Colonic mucosa (tissue), 4 donors: ENCODE measurements at regions of chr14 and their contacts with region 1.

Region 1: DNA sequence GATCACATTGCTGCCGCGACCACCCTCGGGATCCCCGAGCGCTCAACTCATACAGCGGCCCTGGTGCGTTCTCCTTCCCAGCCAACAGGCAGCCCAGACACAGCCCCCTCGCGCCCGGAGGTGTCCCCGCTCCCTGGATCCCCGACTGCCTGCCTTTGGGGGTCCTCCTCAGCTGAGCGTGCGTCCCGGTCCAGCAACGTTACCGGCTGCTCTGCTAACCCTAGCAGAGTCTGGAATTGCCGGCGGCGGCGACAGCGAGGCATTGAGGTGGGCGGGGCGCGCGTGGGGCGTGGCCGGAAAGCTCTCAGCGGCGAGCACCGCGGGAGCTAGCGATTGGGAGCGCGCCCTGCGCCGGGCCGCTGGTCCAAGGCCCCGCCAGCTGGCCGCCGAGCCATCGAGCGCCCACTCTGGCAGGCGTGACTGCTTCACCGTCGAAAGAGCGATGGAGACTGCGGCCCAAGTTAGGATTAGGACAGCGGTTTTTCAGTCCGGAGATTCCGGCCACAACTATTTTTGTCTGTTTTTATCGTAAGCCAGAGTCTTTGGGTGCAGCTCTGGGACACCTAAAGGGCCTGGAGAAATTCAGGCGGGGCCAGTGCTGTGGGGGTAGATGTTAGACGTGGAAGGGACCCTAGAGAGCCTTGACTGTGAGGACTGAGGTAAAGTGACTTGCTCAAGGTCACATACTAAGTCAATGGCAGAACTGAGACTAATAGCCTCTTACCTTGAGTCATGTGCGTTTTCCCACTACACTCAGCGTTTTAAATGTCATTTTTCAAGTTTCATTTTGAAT is at the start of gene HEATR5A:
- DNase-seq: peak; percentile 96
- H3K4me3 ChIP-seq: peak within 1 kb of the TSS; percentile 73
- H3K27ac ChIP-seq: peak within 1 kb of the TSS; percentile 87
- H3K4me1 ChIP-seq: no peaks in the 10 kb centered on the region
- H3K27me3 ChIP-seq: no peaks in the 10 kb centered on the region
- CTCF ChIP-seq: no peak
- total RNA-seq, gene HEATR5A: 45.5 to 58.2 TPM

Region 2: DNA sequence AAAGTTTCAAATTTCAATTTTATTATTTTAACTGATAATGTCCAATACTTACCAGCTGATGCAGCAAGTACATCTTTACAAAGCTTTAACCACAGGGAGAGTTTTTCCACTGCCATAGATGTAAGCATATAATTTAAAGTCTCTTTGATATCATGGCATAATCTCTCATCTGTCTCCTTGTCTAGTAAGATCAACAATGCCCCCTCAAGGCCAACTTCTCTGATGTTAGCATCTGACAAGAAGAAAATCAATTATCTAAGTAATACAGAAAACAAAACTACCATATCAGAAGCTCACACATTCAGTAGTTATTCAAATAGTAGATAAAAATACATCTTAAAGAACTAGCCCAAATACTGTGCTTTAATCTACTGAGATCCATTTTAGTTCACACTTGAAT is 94.4 kb before region 1 on chr14:
- intact Hi-C with region 1: no loop called
- DNase-seq: no peak
- H3K4me3 ChIP-seq: no peak overlapping the region
- H3K27ac ChIP-seq: no peak overlapping the region
- H3K4me1 ChIP-seq: no peaks in the 10 kb centered on the region
- H3K27me3 ChIP-seq: no peaks in the 10 kb centered on the region
- CTCF ChIP-seq: no peak

Region 3: DNA sequence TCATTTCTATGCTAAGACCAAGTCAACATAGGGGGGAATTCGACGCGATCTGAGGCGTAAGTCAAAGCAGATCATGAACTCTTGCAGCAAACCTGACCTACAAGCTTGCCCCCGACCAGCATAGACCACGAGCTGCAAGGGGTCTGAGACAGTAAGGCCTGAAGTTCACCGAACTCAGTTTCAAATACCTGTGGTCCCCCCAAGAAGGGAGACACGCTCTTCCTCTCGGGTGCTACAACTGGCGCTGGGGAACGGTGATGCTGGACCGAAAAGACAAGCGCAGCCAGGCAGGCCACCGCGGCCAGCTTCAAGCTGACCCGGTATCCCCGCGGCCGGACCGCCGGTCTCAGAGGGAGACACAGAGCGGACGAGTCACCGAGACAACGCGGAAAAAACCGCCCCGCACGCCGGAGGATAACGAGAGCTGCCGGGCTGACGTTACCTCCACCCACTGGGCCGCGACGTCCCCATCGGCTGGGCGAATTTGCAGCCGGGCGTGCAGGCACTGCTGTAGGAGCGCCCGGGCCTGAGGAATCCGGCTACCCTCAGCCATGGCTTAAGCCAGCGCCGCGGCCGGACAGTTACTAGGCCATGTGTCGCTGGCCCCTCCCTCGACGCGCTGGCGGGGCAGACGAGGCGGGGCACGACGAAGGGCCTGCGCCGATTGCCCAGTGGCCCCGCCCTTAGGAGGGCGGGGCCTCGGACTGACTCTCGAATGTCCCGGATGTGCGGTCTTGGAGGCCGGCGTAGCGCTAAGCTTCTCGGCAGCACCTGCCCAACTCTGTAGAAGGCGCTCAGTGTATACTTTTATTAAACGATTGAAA is 36.5 kb after region 1 on chr14 and contains the start of gene DTD2:
- intact Hi-C with region 1: loop called (anchors 5 kb)
- DNase-seq: peak; percentile 95
- H3K4me3 ChIP-seq: peak within 1 kb of the TSS; percentile 76
- H3K27ac ChIP-seq: peak within 1 kb of the TSS; percentile 92
- H3K4me1 ChIP-seq: no peaks in the 10 kb centered on the region
- H3K27me3 ChIP-seq: no peaks in the 10 kb centered on the region
- CTCF ChIP-seq: no peak
- total RNA-seq, gene DTD2: 13.7 to 16.2 TPM

Region 4: DNA sequence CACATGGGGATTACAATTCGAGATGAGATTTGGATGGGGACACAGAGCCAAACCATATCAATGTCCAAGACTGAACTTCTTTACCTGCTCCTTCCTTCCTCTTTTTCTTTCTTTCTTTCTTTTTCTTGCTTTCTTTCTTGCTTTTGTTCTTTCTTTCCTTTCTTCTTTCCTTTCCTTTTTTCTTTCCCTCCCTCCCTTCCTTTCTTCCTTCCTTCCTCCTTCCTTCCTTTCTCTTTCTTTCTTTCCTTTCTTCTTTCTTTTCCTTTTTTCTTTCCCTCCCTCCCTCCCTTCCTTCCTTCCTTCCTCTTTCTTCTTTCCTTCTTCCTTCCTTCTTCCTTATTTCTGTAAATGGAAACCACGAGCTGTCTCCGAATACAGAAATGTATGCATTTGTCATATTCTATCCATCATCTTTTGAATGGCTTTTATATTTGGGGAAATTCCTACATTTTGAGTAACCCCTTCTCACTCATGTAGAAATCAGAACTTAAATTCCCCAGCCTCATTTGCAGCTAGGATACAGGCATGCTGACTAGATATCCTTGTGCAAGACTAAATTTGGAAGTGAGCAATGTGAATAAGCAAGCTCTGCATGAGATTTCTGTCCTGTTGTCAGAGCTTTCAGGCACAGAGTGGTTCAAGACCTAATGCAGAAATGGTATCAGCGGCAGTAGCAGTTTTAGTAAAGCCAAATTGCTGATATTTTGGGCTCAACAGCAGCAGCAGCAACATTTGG is 55.8 kb after region 1 on chr14:
- intact Hi-C with region 1: no loop called
- DNase-seq: no peak
- H3K4me3 ChIP-seq: no peak overlapping the region
- H3K27ac ChIP-seq: no peak overlapping the region
- H3K4me1 ChIP-seq: no peaks in the 10 kb centered on the region
- H3K27me3 ChIP-seq: no peaks in the 10 kb centered on the region
- CTCF ChIP-seq: no peak